Panc1 (cell line): ENCODE measurements at regions of chr1 and their contacts with region 1.

Region 1: DNA sequence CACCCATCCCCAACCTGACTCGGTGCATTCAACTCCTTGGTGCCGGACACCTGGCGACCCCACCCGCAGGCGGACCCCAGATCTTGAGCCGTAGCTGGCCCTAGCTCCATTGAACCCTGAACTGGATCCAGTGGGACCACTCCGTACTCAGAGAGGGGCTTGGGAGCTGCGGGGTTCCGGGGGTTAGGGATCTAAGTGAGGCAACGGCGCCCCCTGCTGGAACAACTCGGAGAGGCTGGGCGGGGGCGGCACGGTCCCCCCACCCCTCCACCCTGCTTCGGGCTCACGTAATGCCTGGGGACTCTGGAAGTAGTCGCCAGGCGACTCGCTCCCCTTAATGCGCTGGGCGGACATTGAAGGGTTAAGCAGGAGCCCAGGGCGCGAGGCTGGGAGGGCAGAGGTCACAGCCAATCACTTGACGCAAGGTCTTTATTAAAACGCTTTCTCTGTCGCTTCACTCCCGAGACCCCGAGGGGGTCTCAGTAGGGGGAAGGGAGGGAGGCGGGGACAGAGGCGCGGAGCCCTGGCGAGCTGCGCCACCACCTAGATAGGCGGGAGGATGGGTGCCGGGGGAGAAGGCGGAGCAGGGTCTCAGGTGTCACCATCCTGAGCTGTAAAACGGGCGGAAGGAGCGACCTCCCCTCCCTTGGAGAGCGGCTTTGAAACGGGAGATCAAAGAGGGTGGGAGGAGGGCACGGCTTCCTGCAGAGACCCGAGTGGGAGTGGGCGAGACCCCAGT is 704 bp upstream of the CRABP2 start:
- DNase-seq: no peak
- ATAC-seq: peak; percentile 64
- H3K4me3 ChIP-seq: peak overlapping the region; percentile 82 to 84
- H3K27ac ChIP-seq: peak overlapping the region; percentile 93
- H3K4me1 ChIP-seq: peaks cover 70% of the 10 kb centered on the region
- H3K27me3 ChIP-seq: no peaks in the 10 kb centered on the region
- CTCF ChIP-seq: peak; percentile 92

Region 2: GRCh38 chr1:156641761-156642264 is 64.3 kb before region 1 on chr1 and contains the start of gene BCAN:
- CTCF ChIA-PET with region 1: no interaction called
- POLR2A ChIA-PET with region 1: no interaction called
- in situ Hi-C with region 1: no loop called
- intact Hi-C with region 1: no loop called
- DNase-seq: no peak
- ATAC-seq: no peak
- H3K4me3 ChIP-seq: no peak within 1 kb of the TSS
- H3K27ac ChIP-seq: no peak within 1 kb of the TSS
- H3K4me1 ChIP-seq: peaks cover 23% of the 10 kb centered on the region
- H3K27me3 ChIP-seq: no peaks in the 10 kb centered on the region
- CTCF ChIP-seq: no peak
- total RNA-seq, gene BCAN: 0.57 TPM

Region 3: DNA sequence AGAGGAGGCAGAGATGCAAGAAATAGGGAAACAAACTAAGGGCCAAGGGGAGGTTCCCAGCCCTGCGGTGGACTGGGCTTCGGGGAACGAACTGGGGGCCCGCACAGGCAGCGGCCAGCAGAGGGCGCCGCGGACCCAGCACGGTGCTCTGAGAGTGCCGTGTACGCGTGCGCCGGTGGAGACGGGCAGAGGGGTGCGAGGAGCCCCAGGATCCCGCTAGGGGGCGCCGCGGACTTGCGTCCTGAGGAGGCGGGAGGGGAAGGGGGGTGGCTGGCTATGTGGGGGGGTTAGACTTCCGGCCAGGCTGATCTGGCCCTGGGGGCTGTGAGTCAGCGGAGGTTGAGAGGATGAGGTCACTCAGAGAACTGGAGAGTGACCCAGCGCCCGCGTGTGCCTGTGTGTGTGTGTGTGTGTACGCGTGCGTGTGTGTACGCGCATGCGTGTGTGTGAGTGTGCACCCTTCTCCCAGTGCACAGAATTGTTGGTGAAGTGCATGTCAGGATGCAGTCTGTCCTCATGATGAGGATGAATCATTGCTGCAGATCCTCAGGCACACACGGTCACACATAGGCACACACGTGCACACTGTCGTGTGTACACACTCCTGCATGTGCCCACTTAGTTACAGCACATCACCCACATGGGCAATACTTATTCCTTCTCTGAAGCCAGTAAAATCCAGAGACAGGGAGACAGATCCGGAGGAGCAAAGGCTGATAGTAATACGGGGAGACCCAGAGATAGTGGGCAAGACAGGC is 45.9 kb before region 1 on chr1:
- CTCF ChIA-PET with region 1: interaction called, 6 read pairs
- POLR2A ChIA-PET with region 1: interaction called, 13 read pairs
- in situ Hi-C with region 1: no loop called
- intact Hi-C with region 1: no loop called
- DNase-seq: peak; percentile 95
- ATAC-seq: peak; percentile 79
- H3K4me3 ChIP-seq: peak overlapping the region; percentile 23 to 69
- H3K27ac ChIP-seq: peak overlapping the region; percentile 98
- H3K4me1 ChIP-seq: peaks cover 61% of the 10 kb centered on the region
- H3K27me3 ChIP-seq: no peaks in the 10 kb centered on the region
- CTCF ChIP-seq: peak; percentile 100

Region 4: DNA sequence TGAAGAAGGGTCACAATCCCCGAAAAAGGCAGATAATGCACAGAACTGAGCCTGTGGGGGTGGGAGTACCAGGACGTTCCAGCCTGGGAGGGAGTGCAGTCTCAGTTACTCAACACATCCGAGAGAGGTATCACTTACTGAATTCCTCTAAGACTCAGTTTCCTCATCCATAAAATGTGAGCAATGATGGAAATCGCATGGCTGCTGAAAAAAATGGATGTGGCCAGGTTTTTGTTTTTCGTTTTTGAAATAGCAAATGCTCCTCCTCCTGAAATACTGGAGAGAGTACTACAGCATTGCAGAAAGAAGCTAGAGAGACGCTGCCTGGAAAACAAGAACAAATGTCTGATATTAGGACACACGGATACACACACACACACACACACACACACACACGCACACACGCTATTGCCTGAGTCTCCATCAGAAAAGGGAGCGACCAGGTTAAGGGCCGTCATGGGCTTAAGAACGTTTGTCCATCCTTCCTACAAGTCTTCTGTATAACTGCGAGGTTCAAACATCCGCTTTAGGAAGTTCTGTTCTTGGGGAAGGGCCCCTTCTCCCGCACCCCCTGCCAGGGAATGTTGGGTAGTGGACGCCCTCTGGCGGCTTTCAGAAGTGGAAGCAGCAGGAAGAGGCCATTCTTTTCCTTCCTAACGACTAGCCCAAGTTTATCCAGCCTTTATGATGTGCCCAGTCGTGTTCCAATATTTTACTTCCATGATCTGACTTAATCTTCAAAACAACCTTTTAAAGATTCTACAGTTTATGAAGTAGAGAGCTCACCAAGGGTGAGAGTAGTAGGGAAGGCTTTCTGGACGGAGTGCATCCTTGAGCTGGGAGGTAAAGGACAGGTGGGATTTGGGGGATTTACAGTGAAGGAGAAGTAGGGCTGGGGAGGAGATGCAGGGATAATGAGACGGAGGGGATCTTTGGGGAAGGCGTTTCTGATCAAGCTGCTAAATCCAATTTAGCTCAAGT is 28.2 kb before region 1 on chr1:
- CTCF ChIA-PET with region 1: interaction called, 11 read pairs
- POLR2A ChIA-PET with region 1: interaction called, 5 read pairs
- in situ Hi-C with region 1: no loop called
- intact Hi-C with region 1: no loop called
- DNase-seq: no peak
- ATAC-seq: peak; percentile 58
- H3K4me3 ChIP-seq: peak overlapping the region in 1 of 2 experiments; percentile 57; a peak in 3 of 4 replicates
- H3K27ac ChIP-seq: peak overlapping the region; percentile 72
- H3K4me1 ChIP-seq: peaks cover 18% of the 10 kb centered on the region
- H3K27me3 ChIP-seq: no peaks in the 10 kb centered on the region
- CTCF ChIP-seq: peak; percentile 93

Region 5: GRCh38 chr1:156717275-156717805 is 11.3 kb after region 1 on chr1:
- CTCF ChIA-PET with region 1: interaction called, 13 read pairs
- POLR2A ChIA-PET with region 1: interaction called, 13 read pairs
- in situ Hi-C with region 1: no loop called
- intact Hi-C with region 1: no loop called
- DNase-seq: no peak
- ATAC-seq: no peak
- H3K4me3 ChIP-seq: no peak overlapping the region
- H3K27ac ChIP-seq: no peak overlapping the region
- H3K4me1 ChIP-seq: peaks cover 15% of the 10 kb centered on the region
- H3K27me3 ChIP-seq: no peaks in the 10 kb centered on the region
- CTCF ChIP-seq: no peak

Region 6: GRCh38 chr1:156725683-156726280 is 19.7 kb after region 1 on chr1:
- CTCF ChIA-PET with region 1: interaction called, 30 read pairs
- POLR2A ChIA-PET with region 1: interaction called, 5 read pairs
- in situ Hi-C with region 1: no loop called
- intact Hi-C with region 1: no loop called
- DNase-seq: peak; percentile 77
- ATAC-seq: peak; percentile 78
- H3K4me3 ChIP-seq: peak overlapping the region; percentile 87 to 99
- H3K27ac ChIP-seq: peak overlapping the region; percentile 87
- H3K4me1 ChIP-seq: peaks cover 33% of the 10 kb centered on the region
- H3K27me3 ChIP-seq: no peaks in the 10 kb centered on the region
- CTCF ChIP-seq: peak; percentile 91

Region 7: GRCh38 chr1:156832434-156832833 is 126.3 kb after region 1 on chr1:
- CTCF ChIA-PET with region 1: interaction called, 13 read pairs
- POLR2A ChIA-PET with region 1: no interaction called
- in situ Hi-C with region 1: no loop called
- intact Hi-C with region 1: no loop called
- DNase-seq: no peak
- ATAC-seq: no peak
- H3K4me3 ChIP-seq: no peak overlapping the region
- H3K27ac ChIP-seq: no peak overlapping the region
- H3K4me1 ChIP-seq: no peaks in the 10 kb centered on the region
- H3K27me3 ChIP-seq: peaks cover 9% of the 10 kb centered on the region
- CTCF ChIP-seq: no peak